ENCODE measurements at regions of chr10 and their contacts with region 1.

Region 1: GRCh38 chr10:34723750-34724149 is 91.3 kb downstream of the PARD3 start:
- DNase-seq: no peak
- ATAC-seq: peak; percentile 81

Region 2: GRCh38 chr10:34637418-34637911 is 86.3 kb before region 1 on chr10:
- intact Hi-C with region 1: no loop called
- DNase-seq: peak; percentile 71
- ATAC-seq: peak; percentile 63

Region 3: DNA sequence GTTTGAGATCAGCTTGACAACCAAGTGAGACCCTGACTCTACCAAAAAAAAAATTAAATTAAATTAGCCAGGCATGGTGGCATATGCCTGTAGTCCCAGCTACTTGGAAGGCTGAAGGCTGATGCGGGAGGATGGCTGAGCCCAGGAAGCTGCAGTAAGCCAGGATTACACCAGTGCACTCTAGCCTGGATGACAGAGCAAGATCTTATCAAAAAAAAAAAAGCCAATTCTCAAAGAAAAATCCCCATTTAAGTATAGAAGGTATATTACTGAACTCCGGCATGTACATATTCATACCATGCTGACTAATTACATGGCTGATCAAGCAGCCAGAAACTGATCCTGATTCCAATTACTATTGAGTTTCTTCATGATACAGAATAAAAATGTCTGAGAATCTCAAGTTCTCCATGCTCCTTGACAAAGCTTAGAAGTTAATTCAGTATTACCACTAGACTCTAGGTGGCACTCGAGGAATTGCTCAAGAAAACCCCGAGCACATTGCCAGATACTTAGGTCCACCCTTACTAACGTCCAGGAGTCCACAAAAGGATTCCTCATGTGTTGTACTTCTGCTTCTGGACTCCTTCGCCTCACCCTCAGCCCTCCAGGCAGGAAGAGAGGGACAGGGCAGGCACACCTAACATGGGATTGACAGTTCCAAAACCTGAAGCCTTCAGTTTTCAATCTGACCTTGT is 57.6 kb before region 1 on chr10:
- intact Hi-C with region 1: loop called (anchors 5 kb)
- DNase-seq: no peak
- ATAC-seq: peak; percentile 86

Region 4: DNA sequence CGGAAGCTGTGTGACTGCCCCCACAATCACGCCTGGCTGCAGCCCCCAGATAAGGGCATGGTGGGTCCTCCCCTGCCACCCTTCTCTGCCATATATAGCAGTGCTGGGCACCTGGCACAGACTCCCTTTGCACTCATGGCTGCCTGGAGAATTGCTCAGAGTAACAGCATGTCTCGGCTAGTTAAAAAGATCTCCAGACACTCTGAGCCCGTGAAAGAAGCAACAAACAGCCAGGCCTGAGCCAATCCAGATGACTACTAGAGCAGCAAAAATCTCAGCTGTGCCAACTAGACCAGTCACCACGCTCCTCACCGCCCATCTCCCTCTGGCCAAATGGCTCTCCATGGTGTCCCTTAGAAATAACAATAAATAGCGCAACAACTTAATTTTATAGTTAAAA is 20.1 kb after region 1 on chr10:
- intact Hi-C with region 1: loop called (anchors 2 kb)
- DNase-seq: no peak
- ATAC-seq: peak; percentile 91

Region 5: DNA sequence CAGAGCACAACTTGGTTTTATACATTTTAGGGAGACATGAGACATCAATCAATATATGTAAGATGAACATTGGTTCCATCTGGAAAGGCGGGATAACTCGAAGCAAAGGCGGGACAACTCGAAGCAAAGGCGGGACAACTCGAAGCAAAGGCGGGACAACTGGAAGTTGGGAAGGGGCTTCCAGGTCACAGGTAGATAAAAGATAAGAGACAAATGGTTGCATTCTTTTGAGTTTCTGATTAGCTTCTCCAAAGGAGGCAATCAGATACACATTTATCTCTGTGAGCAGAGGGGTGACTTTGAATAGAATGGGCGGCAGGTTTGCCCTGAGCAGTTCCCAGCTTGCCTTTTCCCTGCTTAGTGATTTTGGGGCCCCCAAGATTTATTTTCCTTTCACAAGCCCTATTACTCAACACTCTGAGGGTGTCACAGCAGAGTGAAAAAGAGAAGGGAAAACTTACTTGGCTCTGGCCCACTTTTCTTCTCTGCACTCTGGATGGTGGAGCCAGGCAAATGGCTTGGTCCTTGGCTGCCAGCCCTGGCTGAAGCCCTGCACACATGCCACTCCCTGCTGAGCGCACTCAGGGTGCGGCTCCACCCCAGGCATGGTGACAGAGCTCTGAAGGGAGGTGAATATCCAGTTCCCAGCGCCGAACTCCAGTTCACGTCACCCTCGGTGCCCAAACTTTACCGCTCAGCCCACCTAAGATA is 44.7 kb after region 1 on chr10:
- intact Hi-C with region 1: loop called (anchors 5 kb)
- DNase-seq: peak; percentile 87
- ATAC-seq: peak; percentile 94

Region 6: DNA sequence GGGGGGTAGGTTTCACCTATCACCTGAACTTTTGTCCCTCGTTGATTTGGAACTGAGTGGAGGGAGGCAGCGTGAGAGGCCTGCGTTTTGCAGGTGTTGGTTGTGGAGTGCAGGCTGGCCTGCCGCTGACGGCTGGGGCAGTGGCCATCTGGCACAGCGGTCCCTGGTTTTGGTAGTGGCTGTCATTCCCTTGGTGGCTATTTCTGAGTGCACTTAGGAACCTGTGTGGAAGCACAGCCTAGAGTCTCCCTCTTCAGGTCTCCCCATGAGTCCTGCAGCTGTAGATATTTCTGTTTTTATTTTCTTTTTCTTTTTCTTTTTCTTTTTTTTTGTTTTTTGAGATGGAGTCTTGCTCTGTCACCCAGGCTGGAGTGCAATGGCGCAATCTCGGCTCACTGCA is 237.2 kb after region 1 on chr10:
- intact Hi-C with region 1: loop called (anchors 2 kb)
- DNase-seq: no peak
- ATAC-seq: peak; percentile 93